H1 (cell line): ENCODE measurements at regions of chrX and their contacts with region 1.

Region 1: GRCh38 chrX:47497273-47497672 is 14.3 kb upstream of the ZNF41 start:
- DNase-seq: no peak
- H3K4me3 ChIP-seq: no peak overlapping the region
- H3K27ac ChIP-seq: no peak overlapping the region
- H3K4me1 ChIP-seq: peaks cover 0 to 12% (median 7%) of the 10 kb centered on the region in 4 experiments; a peak in 3 of 7 replicates
- H3K27me3 ChIP-seq: no peaks in the 10 kb centered on the region
- CTCF ChIP-seq: peak in 1 of 3 experiments; percentile 38; a peak in 1 of 4 replicates
- EP300 ChIP-seq: no peak
- POLR2A ChIP-seq: no peak
- RAD21 ChIP-seq: peak; percentile 68 to 69

Region 2: DNA sequence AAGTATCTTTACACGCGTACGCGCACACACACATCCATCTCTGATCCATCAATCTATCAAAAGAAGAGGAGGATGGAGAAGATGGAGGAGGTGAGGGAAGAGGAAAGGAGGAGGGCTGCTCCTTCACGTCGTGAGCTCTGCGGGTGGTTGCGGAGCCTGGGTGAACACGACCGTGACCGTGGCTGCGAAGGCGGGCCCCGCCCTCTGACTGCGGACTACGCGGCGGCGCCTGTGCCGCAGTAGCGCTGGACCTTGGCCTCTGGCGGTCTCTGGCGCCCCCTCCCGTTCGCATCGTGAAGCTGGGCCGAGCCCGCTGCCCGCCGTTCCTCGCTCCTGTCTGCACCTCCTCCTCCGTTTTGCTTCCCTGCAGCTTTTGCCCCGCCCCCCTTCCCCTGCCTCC is 26.0 kb after region 1 on chrX:
- CTCF ChIA-PET with region 1: interaction called, 33 read pairs
- POLR2A ChIA-PET with region 1: interaction called, 3 read pairs
- DNase-seq: peak; percentile 7 to 91
- H3K4me3 ChIP-seq: peak overlapping the region; percentile 20 to 68 (median 49)
- H3K27ac ChIP-seq: no peak overlapping the region
- H3K4me1 ChIP-seq: peaks cover 0 to 3% (median 1%) of the 10 kb centered on the region in 4 experiments; a peak in 2 of 7 replicates
- H3K27me3 ChIP-seq: peaks cover 0 to 3% (median 0%) of the 10 kb centered on the region in 4 experiments; a peak in 1 of 7 replicates
- CTCF ChIP-seq: peak; percentile 64 to 80 (median 76)
- EP300 ChIP-seq: no peak; a peak in 1 of 3 replicates
- POLR2A ChIP-seq: no peak
- RAD21 ChIP-seq: peak; percentile 82 to 86